Activated T-helper 1 cell treated with anti-CD3 and anti-CD28 coated beads, Interleukin-12 subunit alpha, Interleukin-12 subunit beta, Interleukin-2, Interleukin-4 antibody, amounts not matched to agents 30 ng/mL and 10 ng/mL and 1 ng/mL, durations not matched to agents 14 hours and 24 hours and 36 hours (primary cell): ENCODE measurements at regions of chr1 and their contacts with region 1.

Region 1: DNA sequence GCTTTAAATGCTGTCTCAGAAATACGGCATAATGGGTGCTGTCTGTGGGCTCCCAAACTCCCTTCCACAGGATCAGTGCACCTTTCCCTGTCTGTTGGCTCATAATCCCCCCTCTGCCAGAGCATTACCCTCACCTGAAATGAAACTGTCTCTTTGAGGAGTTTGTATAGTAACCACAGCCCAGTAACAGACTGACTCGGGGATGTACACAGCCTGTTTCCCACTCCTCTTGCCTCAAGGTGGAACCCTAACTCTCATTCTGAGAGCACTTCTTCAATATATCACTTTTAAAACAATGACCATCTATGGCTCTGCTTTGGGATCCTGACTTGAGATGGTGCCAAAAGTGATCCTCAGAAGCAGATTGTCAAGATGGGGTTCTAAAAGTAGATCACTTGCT is 332.5 kb downstream of the AMY1C start:
- DNase-seq: no peak
- H3K4me3 Mint-ChIP-seq: no peak overlapping the region
- H3K27ac Mint-ChIP-seq: no peak overlapping the region
- H3K4me1 Mint-ChIP-seq: no peaks in the 10 kb centered on the region
- H3K27me3 Mint-ChIP-seq: no peaks in the 10 kb centered on the region

Region 2: GRCh38 chr1:104028416-104029035 is 53.7 kb before region 1 on chr1:
- intact Hi-C with region 1: loop called (anchors 10 kb)
- DNase-seq: no peak
- H3K4me3 Mint-ChIP-seq: no peak overlapping the region
- H3K27ac Mint-ChIP-seq: no peak overlapping the region
- H3K4me1 Mint-ChIP-seq: no peaks in the 10 kb centered on the region
- H3K27me3 Mint-ChIP-seq: no peaks in the 10 kb centered on the region